ENCODE measurements at regions of chr16 and their contacts with region 1.

Region 1: DNA sequence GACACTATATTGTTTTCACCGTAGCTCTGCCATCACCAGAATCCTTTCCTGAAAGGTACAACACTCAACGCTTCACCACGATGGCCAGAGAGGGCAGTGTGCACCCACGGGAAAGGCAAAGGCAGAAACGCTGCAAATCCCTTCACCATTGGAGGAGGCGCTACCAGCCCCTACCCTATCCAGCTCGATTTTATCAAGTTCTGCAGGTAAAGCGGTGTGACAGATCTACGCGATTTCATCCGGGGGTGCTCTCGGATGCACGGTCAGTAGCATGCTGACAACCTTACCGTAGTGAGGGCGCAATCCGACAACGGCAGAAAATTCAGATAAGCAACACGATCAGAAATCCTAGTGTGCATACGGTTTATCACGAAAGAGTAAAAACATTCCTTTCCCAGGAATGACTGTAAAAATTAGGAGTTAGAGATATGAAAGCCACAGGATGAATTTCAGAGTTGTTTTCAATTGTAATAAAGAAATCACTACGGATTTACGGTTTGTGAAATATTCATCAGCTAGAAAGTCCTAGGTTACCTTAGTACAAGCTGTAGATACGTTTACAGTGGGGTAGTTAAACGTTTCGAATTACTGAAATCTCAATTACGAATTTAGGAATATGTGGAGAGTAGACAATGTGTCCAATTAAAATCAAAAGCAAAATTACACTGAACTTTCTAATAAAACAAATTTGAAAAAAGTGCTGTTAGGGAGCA is 1.8 kb downstream of the NETO2 start:
- DNase-seq: peak; percentile 69
- ATAC-seq: peak; percentile 53
- H3K4me3 Mint-ChIP-seq: peak overlapping the region; percentile 86
- H3K27ac Mint-ChIP-seq: peak overlapping the region; percentile 59
- H3K4me1 Mint-ChIP-seq: peaks cover 23% of the 10 kb centered on the region
- H3K27me3 Mint-ChIP-seq: no peaks in the 10 kb centered on the region
- CTCF ChIP-seq: no peak

Region 2: DNA sequence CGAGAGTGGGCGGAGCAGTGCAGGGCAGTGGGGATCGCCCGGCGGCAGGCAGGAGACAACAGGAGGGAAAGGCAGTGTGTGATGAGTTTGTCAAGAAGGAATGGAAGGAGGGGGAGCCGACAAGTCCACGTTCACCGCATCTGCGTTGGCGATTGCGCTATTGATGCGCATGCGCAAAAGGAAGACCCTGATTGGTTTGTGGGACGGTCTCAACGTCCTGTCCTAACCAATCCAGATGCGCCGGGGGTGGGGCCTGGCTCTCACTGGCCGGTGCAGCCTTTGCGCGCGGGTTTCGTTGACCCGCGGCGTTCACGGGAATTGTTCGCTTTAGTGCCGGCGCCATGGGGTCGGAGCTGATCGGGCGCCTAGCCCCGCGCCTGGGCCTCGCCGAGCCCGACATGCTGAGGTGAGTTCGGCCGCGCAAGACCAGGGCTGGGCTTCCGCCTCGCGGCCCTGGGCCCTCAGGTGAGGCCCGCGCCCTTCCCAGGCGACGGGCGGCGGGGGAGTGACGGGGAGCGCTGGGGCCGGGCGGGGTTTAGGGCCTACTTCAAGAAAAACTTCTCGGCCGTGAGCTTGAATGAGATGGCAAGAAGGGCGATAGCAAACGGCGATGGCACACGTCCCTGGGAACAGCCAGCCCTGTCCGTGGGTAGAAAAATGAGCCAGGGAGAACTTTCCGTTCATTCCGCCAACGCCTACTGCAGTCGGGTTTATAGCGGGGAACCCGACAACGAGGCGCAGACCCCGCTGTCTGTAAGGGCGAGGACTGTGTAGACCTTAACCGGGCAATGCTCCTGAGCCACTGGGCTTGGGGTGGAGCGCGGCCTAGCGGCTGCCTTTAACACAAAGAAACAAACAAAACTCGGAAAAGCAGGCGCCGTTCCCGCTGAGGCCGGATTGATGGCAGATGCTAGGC is 452.3 kb before region 1 on chr16 and contains the start of gene ORC6:
- CTCF ChIA-PET with region 1: no interaction called
- POLR2A ChIA-PET with region 1: no interaction called
- intact Hi-C with region 1: loop called (anchors 1 kb)
- DNase-seq: peak; percentile 91
- ATAC-seq: peak; percentile 75
- H3K4me3 Mint-ChIP-seq: no peak within 1 kb of the TSS
- H3K27ac Mint-ChIP-seq: no peak within 1 kb of the TSS
- H3K4me1 Mint-ChIP-seq: peaks cover 32% of the 10 kb centered on the region
- H3K27me3 Mint-ChIP-seq: no peaks in the 10 kb centered on the region
- CTCF ChIP-seq: no peak
- total RNA-seq, gene ORC6: 8.0 and 13.2 TPM in 2 replicates

Region 3: GRCh38 chr16:46973207-46973995 is 168.5 kb before region 1 on chr16 and contains the start of gene DNAJA2:
- CTCF ChIA-PET with region 1: interaction called, 9 read pairs
- POLR2A ChIA-PET with region 1: interaction called, 8 read pairs
- intact Hi-C with region 1: loop called (anchors 1 kb)
- DNase-seq: peak; percentile 94
- ATAC-seq: peak; percentile 93
- H3K4me3 Mint-ChIP-seq: peak within 1 kb of the TSS; percentile 95
- H3K27ac Mint-ChIP-seq: peak within 1 kb of the TSS; percentile 98
- H3K4me1 Mint-ChIP-seq: peaks cover 44% of the 10 kb centered on the region
- H3K27me3 Mint-ChIP-seq: no peaks in the 10 kb centered on the region
- CTCF ChIP-seq: no peak
- total RNA-seq, gene DNAJA2: 54.4 and 57.1 TPM in 2 replicates

Region 4: DNA sequence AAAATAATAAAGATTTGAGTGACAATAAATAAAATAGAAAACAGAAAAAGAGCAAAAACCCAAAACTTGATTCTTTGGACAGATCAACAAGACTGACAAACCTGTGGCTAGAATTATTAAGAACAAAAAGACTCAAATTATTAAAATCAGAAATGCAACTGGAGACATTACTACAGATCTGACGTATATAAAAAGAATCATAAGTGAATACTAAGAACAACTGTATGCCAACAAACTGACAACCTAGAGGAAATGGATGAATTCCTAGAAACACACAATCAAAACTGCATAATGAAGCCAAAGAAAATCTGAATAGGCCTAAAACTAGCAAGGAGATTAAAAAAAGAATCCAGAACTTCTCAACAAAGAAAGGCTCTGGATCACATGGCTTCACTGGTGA is 45.6 kb before region 1 on chr16:
- CTCF ChIA-PET with region 1: no interaction called
- POLR2A ChIA-PET with region 1: no interaction called
- intact Hi-C with region 1: no loop called
- DNase-seq: no peak
- ATAC-seq: no peak
- H3K4me3 Mint-ChIP-seq: no peak overlapping the region
- H3K27ac Mint-ChIP-seq: no peak overlapping the region
- H3K4me1 Mint-ChIP-seq: no peaks in the 10 kb centered on the region
- H3K27me3 Mint-ChIP-seq: no peaks in the 10 kb centered on the region
- CTCF ChIP-seq: no peak

Region 5: DNA sequence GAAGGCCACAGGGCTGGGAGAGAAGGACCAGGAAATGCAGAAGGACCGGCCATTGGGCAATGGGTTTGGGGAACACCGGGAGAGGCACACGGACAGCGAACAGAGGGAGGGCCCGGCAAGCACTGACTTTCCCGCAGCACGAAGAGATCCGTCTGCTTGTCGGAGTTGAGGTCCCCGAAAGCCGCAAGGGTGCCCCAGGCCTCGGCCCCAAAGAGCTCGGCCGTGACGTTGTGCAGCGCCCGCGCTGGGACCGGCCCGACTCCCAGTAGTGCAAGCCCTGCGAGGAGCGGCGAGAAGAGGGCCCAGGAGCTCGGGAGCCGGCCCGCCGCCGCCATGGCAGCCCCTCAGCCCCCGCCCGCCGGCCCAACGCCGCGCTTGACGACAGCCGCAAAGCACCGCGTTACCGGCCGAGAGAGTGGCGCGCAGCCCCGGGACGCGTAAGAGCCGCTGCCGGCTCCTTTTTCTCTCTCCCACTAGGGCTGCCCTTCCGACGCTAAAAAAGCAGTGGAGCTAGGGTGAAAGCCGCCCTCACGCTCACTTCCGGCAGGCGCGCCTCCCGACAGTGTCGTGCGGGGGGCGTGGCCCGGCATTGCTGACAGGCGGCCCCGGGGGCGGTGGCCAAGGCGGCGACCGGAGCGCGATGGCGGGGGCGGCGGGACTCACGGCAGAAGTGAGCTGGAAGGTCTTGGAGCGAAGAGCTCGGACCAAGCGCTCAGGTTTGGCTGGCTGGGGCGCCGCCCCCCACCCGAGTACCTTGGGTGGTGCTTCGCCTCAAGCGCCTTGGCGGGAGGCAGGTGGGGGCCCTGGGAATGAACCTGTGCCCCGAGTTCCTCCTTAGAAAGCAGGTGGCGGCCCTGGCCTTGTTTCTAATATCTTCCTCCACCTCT is 319.0 kb after region 1 on chr16 and contains the starts of genes ITFG1 and PHKB:
- CTCF ChIA-PET with region 1: interaction called, 5 read pairs
- POLR2A ChIA-PET with region 1: no interaction called
- intact Hi-C with region 1: loop called (anchors 2 kb)
- DNase-seq: peak; percentile 95
- ATAC-seq: peak; percentile 90
- H3K4me3 Mint-ChIP-seq: peak within 1 kb of the TSS; percentile 98
- H3K27ac Mint-ChIP-seq: peak within 1 kb of the TSS; percentile 96
- H3K4me1 Mint-ChIP-seq: peaks cover 68% of the 10 kb centered on the region
- H3K27me3 Mint-ChIP-seq: no peaks in the 10 kb centered on the region
- CTCF ChIP-seq: no peak
- total RNA-seq, gene ITFG1: 23.8 and 30.9 TPM in 2 replicates
- total RNA-seq, gene PHKB: 94.8 and 110 TPM in 2 replicates

Region 6: DNA sequence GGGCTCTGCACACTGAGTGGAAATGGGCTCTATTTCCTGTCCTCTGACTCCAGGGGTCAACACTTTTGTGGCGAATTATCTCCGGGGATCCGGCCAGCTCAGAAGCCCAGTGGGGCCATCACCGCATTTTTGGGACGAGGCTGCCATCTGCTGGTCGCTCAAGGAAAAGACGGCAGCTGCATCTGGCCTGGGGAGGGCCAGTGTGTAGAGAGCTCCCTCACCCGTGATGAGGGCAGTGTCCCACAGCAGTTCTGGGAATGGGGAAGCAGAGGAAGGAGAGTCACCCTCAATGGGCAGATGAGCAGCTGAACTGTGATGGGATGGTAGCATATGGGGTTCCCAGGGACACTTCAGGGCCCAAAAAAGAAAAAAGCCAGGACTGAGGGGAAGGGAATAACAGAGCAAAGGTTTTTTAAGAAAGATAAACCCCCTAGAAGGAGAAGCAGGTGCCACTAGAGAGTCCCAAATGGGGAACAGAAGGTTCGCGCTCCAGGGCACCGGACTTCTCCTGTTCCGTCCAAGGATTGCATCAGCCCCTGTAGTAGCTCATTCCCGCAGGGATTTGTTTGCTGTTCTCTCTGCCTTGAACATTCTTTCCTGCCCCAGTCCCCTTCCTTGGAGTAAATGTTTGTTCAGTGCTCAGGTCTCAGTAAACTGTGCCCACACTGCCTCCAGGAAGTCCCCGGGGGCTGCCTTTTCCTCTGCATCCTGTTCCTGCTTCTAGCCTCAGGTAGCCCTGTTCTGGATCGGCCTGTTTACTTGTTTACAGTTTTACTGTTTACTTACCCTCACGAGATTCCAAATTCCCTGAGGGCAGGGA is 1023.2 kb after region 1 on chr16:
- CTCF ChIA-PET with region 1: interaction called, 47 read pairs
- POLR2A ChIA-PET with region 1: no interaction called
- intact Hi-C with region 1: loop called (anchors 2 kb)
- DNase-seq: peak; percentile 60
- ATAC-seq: peak; percentile 89
- H3K4me3 Mint-ChIP-seq: no peak overlapping the region
- H3K27ac Mint-ChIP-seq: no peak overlapping the region
- H3K4me1 Mint-ChIP-seq: peaks cover 4% of the 10 kb centered on the region
- H3K27me3 Mint-ChIP-seq: peaks cover 4% of the 10 kb centered on the region
- CTCF ChIP-seq: no peak

Region 7: DNA sequence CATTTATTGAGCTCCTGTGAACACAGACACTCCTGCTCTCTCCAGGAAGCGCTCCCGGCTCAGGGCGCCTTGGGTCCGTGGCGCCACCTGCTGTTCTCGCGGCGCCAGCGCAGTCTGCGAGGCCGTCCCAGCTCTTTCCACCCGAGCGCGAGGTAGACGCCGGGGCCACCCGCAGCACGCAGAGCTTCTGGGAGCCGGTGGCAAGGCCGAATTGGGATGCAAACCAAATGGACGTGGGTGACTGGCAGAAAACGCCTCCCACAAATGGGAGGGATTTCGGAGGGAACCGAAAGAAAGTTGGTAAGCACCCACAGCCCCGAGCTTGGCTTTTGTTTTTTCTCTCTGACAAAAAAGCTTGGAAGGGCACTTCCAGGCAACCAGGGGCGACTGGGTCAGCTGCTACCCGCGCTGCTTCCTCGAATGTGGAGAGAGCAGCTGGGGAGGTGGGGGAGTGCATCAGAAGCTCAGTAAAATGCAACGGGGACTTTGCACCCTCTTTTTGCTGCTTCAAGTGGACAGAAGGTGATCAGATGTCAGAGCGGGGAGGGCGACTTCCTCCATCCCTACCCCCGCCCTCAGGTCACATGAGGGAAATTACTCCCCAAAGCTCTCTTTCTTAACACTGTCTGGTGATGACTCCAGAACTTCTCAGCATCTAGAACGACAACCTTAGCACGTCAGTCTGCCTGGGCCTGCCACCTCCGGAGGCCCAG is 1481.5 kb after region 1 on chr16:
- CTCF ChIA-PET with region 1: no interaction called
- POLR2A ChIA-PET with region 1: no interaction called
- intact Hi-C with region 1: loop called (anchors 2 kb)
- DNase-seq: peak; percentile 78
- ATAC-seq: peak; percentile 98
- H3K4me3 Mint-ChIP-seq: peak overlapping the region; percentile 82
- H3K27ac Mint-ChIP-seq: no peak overlapping the region
- H3K4me1 Mint-ChIP-seq: peaks cover 24% of the 10 kb centered on the region
- H3K27me3 Mint-ChIP-seq: peaks cover 3% of the 10 kb centered on the region
- CTCF ChIP-seq: peak; percentile 97